Heart left ventricle (tissue), 16 donors: ENCODE measurements at regions of chr18 and their contacts with region 1.

Region 1: DNA sequence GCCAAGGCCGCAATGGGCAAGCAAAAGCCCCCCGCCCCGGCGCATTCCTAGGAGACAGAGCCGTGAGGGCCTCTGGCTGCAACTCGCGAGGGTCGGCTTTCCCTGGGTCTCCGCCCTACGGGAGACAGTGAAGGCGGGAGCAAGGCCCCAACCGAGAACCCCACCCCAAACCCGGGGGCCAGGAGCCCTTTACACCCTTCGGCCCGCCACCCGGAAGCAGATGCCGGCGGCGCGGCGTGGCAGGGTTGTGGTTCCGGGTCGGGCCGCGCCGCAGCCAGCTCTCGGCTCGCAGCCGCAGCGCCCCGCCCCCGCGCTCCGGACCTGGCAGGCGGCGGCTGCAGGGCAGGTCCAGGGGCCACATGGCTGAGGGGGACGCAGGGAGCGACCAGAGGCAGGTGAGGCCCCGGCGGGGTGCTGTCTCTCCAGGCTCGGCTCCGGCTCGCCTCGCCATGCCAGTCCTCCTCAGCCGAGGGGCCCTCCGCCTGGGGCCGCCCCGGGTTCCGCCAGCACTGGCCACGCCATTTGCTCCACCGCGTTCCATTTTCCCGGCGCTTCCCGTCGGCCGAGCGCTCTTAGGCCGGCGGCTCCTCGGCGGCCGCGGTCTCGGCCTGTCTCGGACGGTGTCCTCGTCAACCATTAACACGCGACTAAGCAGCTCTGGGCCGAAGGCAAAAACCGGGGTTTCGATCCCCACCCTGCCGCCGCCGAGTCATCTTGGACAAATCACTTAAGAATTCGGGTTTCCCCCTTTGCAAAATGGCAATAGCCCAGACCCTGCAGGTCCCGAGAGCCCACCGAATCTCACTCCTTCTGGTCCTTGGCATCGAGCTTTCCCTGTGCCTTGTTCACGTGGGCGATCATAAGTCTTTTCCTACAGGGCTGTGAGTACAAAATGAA is at the start of gene IMPACT:
- DNase-seq: peak; percentile 86 to 93 (median 88)
- ATAC-seq: peak; percentile 75 to 100 (median 97)
- H3K4me3 ChIP-seq: peak within 1 kb of the TSS; percentile 56 to 96 (median 85)
- H3K27ac ChIP-seq: peak within 1 kb of the TSS; percentile 19 to 92 (median 82)
- H3K4me1 ChIP-seq: peaks cover 0 to 18% (median 9%) of the 10 kb centered on the region in 12 donors
- H3K27me3 ChIP-seq: peaks cover 0 to 31% (median 0%) of the 10 kb centered on the region in 9 donors
- CTCF ChIP-seq: no peak
- POLR2A ChIP-seq: peak in 1 of 2 donors; percentile 64
- total RNA-seq, gene IMPACT: 10.8 to 37.6 (median 23.8) TPM

Region 2: GRCh38 chr18:23071285-23071684 is 1355.4 kb before region 1 on chr18:
- intact Hi-C with region 1: no loop called
- DNase-seq: peak in 4 of 5 donors; percentile 28 to 39 (median 36)
- ATAC-seq: peak in 3 of 4 donors; percentile 26 to 70 (median 65)
- H3K4me3 ChIP-seq: no peak overlapping the region
- H3K27ac ChIP-seq: peak overlapping the region in 1 of 12 donors; percentile 37
- H3K4me1 ChIP-seq: peaks cover 0 to 46% (median 0%) of the 10 kb centered on the region in 12 donors
- H3K27me3 ChIP-seq: no peaks in the 10 kb centered on the region
- CTCF ChIP-seq: no peak
- POLR2A ChIP-seq: no peak

Region 3: GRCh38 chr18:24189007-24189528 is 237.6 kb before region 1 on chr18:
- intact Hi-C with region 1: loop called in 1 of 10 experiments (anchors 10 kb)
- DNase-seq: no peak
- ATAC-seq: peak in 3 of 4 donors; percentile 37 to 57 (median 42)
- H3K4me3 ChIP-seq: no peak overlapping the region
- H3K27ac ChIP-seq: no peak overlapping the region
- H3K4me1 ChIP-seq: peaks cover 0 to 37% (median 21%) of the 10 kb centered on the region in 12 donors
- H3K27me3 ChIP-seq: no peaks in the 10 kb centered on the region
- CTCF ChIP-seq: no peak
- POLR2A ChIP-seq: no peak

Region 4: DNA sequence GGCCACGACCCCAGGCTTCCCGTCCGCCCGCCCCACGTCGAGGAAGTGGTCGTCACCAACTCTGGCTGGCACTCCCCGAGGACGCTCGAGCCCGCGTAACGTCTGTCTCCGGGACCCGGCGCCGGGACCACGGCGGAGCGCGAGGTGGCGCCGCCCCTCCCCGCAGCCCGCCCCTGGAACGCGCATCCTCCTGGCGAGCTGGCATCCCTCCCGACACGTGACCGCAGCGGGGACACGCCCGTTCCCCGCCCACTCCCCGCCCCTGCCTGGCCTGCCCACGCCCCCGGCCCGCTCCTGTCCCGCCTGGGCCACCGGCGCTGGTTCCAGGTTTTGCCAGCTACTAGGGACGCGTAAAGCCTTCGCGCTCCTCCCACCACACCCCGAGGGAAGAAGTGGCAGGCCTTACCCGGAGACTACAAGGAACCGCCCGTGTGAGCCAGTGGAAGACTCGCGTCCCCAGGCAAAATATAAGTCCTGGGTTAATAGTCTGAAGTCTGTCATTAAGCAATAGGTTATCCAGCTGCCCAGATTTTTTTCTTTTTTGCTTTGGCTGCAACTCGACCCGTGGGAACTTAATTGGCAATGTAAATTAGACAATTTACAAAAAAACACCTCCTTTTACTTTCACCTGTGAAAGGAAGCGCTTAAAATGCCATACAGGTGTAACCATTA is 28.8 kb before region 1 on chr18 and contains the start of gene OSBPL1A:
- intact Hi-C with region 1: loop called in 2 of 10 experiments (anchors 2 kb)
- DNase-seq: peak; percentile 95 to 98 (median 96)
- ATAC-seq: peak; percentile 97 to 99 (median 98)
- H3K4me3 ChIP-seq: peak within 1 kb of the TSS; percentile 65 to 88 (median 76)
- H3K27ac ChIP-seq: peak within 1 kb of the TSS in 11 of 12 donors; percentile 66 to 94 (median 84)
- H3K4me1 ChIP-seq: peaks cover 0 to 20% (median 6%) of the 10 kb centered on the region in 12 donors
- H3K27me3 ChIP-seq: no peaks in the 10 kb centered on the region
- CTCF ChIP-seq: peak in 1 of 12 donors; percentile 28
- POLR2A ChIP-seq: peak in 1 of 2 donors; percentile 54
- total RNA-seq, gene OSBPL1A: 49.7 to 85.4 (median 76.1) TPM

Region 5: DNA sequence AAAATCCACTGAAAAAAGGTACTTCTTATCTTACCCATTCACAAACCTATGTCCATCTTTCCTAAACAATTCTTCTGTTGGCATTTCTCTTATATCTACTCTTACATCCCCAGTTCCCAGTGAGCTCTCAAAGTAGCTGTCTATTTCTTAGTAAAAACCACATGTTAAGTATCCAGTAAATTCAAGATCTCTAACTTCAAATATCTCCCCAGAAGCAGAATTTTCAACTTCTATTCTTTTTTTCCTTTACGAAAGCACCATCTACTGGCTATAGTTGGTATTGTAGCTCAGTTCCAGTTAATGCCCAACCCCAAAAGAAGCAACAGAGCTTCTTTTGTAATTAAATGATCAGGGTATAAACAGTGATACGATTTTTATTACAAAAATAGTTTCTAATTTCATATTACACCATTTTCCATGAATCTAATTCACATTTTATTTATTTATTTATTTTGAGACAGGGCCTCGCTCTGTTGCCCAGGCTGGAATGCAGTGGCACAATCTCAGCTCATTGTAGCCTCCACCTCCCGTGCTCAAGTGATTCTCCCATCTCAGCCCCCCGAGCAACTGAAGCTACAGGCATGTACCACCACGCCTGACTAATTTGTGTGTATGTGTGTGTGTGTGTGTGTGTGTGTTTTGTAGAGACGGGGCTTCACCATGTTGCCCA is 62.3 kb after region 1 on chr18:
- intact Hi-C with region 1: no loop called
- DNase-seq: no peak
- ATAC-seq: peak in 1 of 4 donors; percentile 61
- H3K4me3 ChIP-seq: no peak overlapping the region
- H3K27ac ChIP-seq: no peak overlapping the region
- H3K4me1 ChIP-seq: peaks cover 0 to 6% (median 0%) of the 10 kb centered on the region in 12 donors
- H3K27me3 ChIP-seq: no peaks in the 10 kb centered on the region
- CTCF ChIP-seq: peak; percentile 75 to 86 (median 83)
- POLR2A ChIP-seq: no peak

Region 6: DNA sequence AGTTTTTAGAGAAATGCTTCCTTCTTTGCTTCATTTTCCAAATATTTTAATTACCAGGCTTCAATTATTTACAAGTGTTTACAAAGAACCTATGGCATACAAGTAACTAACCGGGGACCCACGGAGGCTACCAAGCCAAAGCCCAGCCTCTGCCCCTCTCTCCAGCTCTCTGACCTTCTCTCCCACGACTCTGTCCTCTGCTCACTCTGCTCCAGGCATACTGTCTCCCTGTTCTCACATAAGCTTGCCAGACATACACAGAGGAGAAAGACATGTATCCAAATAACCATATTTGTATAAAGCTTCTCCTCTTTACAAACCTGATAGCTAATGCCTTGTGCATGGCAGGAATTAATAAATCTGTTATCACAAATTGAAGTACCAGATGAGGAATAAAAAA is 784.0 kb after region 1 on chr18:
- intact Hi-C with region 1: no loop called
- DNase-seq: no peak
- ATAC-seq: peak; percentile 67 to 84 (median 78)
- H3K4me3 ChIP-seq: no peak overlapping the region
- H3K27ac ChIP-seq: no peak overlapping the region
- H3K4me1 ChIP-seq: peaks cover 0 to 8% (median 0%) of the 10 kb centered on the region in 12 donors
- H3K27me3 ChIP-seq: no peaks in the 10 kb centered on the region
- CTCF ChIP-seq: no peak
- POLR2A ChIP-seq: no peak